Vagina (tissue), 2 donors: ENCODE measurements at regions of chr15 and their contacts with region 1.

Region 1: GRCh38 chr15:55221090-55222011 is 24.6 kb upstream of the RSL24D1 start:
- DNase-seq: no peak
- H3K4me3 ChIP-seq: no peak overlapping the region
- H3K27ac ChIP-seq: peak overlapping the region; percentile 62
- H3K4me1 ChIP-seq: peaks cover 9% of the 10 kb centered on the region
- H3K27me3 ChIP-seq: no peaks in the 10 kb centered on the region
- CTCF ChIP-seq: peak in 1 of 3 experiments; percentile 6
- POLR2A ChIP-seq: no peak

Region 2: DNA sequence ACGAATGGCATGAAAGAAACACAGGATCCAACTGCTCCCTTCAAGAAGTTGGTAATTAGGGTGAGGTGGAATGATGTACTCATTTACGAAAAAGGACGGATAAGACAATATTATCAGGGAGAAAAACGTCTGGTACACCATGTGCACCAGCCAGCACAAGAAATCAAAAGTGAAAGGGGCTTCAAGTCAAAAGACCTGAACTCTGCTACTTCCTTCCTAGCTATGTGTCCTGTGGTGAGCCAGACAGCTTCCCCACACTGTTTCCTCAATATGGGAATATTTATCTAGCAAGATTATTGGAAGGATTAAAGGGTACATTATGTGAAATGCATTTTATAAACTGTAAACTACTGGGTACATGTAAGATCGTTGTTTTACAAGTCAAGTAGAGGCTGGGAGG is 34.4 kb after region 1 on chr15:
- intact Hi-C with region 1: no loop called
- DNase-seq: no peak
- H3K4me3 ChIP-seq: peak overlapping the region in 1 of 2 donors; percentile 16
- H3K27ac ChIP-seq: peak overlapping the region; percentile 39
- H3K4me1 ChIP-seq: peaks cover 58% of the 10 kb centered on the region
- H3K27me3 ChIP-seq: no peaks in the 10 kb centered on the region
- CTCF ChIP-seq: no peak
- POLR2A ChIP-seq: no peak

Region 3: DNA sequence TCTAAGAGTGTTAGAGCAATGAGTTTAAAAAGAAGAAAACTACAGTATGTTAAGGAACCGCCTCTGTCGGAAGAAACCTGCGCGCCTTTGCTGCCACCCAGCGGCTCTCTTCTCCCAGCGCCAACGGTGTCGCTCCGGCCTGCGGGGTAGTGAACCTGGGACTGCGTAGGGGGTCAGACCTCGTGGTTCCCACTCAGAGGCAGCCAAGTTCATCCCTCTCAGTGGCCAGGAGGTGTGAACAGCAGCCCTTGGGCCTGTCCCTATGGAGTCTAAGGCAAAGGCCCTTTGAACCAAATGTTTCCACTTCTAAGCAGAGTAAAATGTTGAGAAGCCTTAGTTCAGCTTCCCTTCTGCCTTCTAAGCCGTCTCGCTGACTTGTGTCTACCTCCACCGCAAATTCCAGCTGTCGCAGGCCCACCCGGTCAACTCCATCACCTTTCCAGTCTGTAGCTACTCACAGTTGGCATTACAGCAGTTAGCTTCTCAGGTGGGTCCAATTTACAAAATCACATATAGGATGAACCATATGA is 69.2 kb after region 1 on chr15:
- intact Hi-C with region 1: loop called (anchors 2 kb)
- DNase-seq: peak in 1 of 2 donors; percentile 90
- H3K4me3 ChIP-seq: peak overlapping the region; percentile 70 to 76
- H3K27ac ChIP-seq: peak overlapping the region; percentile 91
- H3K4me1 ChIP-seq: peaks cover 15% of the 10 kb centered on the region
- H3K27me3 ChIP-seq: no peaks in the 10 kb centered on the region
- CTCF ChIP-seq: peak; percentile 65 to 91 (median 66)
- POLR2A ChIP-seq: no peak